ENCODE measurements at regions of chr19 and their contacts with region 1.

Region 1: GRCh38 chr19:33406521-33407139 is 33.1 kb downstream of the CEBPG start:
- DNase-seq: no peak
- ATAC-seq: peak; percentile 94
- H3K4me3 ChIP-seq: no peak overlapping the region
- H3K27ac ChIP-seq: no peak overlapping the region
- H3K4me1 ChIP-seq: 0 out of 2 replicates have a peak, but pooled peaks cover 4% of the 10 kb centered on the region
- H3K27me3 ChIP-seq: no peaks in the 10 kb centered on the region
- CTCF ChIP-seq: peak; percentile 87 to 92 (median 87)
- EP300 ChIP-seq: no peak
- POLR2A ChIP-seq: no peak
- RAD21 ChIP-seq: peak; percentile 85

Region 2: DNA sequence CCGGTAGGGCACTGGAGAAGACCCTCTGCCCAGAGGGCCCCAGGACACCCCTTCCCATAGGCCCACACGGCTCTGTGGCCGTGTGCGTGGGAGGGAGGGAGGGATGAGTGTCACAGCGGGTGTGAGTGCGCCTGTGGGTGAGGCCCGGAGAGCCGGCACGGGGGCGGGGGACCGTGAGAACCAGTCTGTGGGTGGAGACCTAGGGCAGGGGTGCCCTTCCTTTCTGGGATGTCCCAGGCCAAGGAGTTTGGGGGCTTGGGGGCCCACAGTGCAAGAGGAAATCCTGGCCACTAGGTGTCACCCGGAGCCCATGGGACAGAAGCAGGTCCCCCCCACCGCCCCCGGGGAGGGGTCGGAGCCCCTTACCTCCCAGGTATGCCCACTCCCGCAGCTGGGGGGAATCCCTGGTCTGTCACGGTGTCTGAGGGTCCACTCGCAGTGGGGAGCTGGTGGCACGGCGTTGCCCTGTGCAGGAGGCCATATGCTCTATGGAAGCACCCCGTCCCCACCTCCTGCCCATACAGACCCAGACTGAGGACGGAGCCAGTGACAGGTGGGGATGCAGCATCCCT is 165.0 kb before region 1 on chr19:
- CTCF ChIA-PET with region 1: interaction called, 46 read pairs
- POLR2A ChIA-PET with region 1: no interaction called
- RAD21 ChIA-PET with region 1: interaction called, 8 read pairs
- SMC1A ChIA-PET with region 1: interaction called, 6 read pairs
- in situ Hi-C with region 1: loop called (anchors 5 kb)
- intact Hi-C with region 1: no loop called
- DNase-seq: no peak
- ATAC-seq: peak; percentile 71
- H3K4me3 ChIP-seq: no peak overlapping the region
- H3K27ac ChIP-seq: no peak overlapping the region
- H3K4me1 ChIP-seq: no peaks in the 10 kb centered on the region
- H3K27me3 ChIP-seq: peaks cover 0 to 3% of the 10 kb centered on the region in 2 experiments; a peak in 1 of 4 replicates
- CTCF ChIP-seq: peak; percentile 53 to 62 (median 54)
- EP300 ChIP-seq: no peak
- POLR2A ChIP-seq: no peak
- RAD21 ChIP-seq: peak; percentile 56

Region 3: DNA sequence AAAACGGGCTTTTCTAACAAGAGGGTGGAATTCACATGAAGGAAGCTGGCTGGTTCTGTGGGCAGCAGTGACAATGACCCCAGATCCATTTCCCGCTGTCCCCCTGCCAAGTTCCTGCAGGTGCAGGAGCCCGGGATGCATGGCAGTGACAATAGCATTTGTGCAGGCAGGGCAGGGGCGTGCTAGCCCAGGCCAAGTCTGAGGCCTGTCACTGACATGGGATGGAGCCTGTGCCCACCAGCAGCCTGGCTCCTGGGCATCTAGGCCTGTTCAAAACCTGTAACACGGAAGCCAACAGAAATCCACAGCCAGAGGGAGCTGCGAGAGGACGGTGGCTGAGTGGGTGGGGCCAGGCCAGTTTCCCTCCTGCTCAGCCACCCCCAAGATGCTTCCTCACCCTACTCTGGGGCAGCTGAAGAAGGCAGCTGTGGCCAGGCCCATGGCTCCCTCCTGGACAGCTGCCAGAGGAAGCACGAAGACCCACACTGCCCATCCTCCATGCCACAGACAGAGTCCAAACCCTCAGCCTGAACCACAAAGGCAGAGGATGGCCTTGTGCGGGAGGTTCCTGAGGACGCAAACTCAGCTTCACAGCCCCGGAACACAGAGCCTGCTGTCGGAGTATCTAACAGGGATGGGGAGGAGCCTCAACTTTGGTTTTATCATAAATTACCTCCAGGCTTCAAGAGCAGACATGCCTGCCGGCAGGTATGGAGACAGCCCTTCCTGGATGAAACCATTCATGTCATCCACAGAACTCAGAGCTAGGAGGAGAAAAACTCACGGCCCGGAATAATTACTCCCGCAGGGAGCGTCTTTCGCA is 40.9 kb after region 1 on chr19:
- CTCF ChIA-PET with region 1: no interaction called
- POLR2A ChIA-PET with region 1: no interaction called
- RAD21 ChIA-PET with region 1: no interaction called
- SMC1A ChIA-PET with region 1: no interaction called
- in situ Hi-C with region 1: no loop called
- intact Hi-C with region 1: no loop called
- DNase-seq: no peak
- ATAC-seq: no peak
- H3K4me3 ChIP-seq: no peak overlapping the region
- H3K27ac ChIP-seq: no peak overlapping the region
- H3K4me1 ChIP-seq: no peaks in the 10 kb centered on the region
- H3K27me3 ChIP-seq: no peaks in the 10 kb centered on the region
- CTCF ChIP-seq: no peak
- EP300 ChIP-seq: no peak
- POLR2A ChIP-seq: no peak
- RAD21 ChIP-seq: no peak

Measured in GM12878 (cell line).